CD4-positive, alpha-beta memory T cell (primary cell): ENCODE measurements at regions of chrX and their contacts with region 1.

Region 1: DNA sequence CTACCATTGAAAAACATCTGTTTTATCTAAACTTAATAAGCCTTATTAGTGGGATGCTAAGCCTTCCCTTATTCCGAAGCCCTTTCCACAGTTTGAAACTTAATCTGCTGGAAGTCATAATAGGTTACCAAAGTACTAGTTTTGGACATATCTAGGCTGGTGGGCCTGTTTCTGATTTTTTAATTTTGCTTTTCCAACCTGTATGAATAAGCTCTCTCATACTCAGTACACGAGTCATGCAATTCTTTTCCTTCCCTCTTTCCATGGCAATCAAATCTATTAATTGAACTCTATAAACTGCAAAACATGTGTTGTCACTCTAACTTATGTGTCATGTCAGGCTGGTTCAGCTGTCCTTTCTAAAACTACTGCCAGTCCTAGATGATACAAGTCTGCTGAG is 91.0 kb downstream of the AMMECR1 start:
- DNase-seq: no peak
- H3K4me3 ChIP-seq: no peak overlapping the region
- H3K4me3 Mint-ChIP-seq: no peak overlapping the region
- H3K27ac ChIP-seq: no peak overlapping the region
- H3K27ac Mint-ChIP-seq: peak overlapping the region in 2 of 7 donors; percentile 15 to 68
- H3K4me1 ChIP-seq: peaks cover 36% of the 10 kb centered on the region
- H3K4me1 Mint-ChIP-seq: peaks cover 25 to 52% (median 31%) of the 10 kb centered on the region in 4 donors
- H3K27me3 ChIP-seq: no peaks in the 10 kb centered on the region
- H3K27me3 Mint-ChIP-seq: no peaks in the 10 kb centered on the region

Region 2: DNA sequence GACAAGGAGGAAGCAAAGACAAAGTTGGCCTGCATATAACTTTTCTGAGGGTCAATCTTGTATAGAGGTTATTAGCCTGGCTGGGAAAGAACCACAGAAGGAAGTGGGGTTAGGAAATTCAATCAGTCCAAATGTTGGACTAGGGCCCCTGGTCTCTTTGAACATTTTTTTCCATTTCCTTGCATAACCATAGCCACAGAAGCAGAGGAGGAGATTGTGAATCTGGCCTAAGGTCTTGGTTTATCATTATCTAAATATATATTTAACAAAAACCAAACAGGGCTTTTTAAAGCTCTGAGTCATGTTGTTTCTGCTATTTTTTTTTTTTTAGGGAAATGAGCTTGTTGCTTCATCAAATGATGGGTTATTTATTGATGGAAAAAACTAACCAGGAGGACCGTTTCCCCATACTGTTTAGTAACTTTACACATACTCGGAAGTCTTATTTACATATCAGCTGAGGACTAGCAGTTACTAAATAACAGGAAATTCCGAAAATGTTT is 396.2 kb before region 1 on chrX:
- CTCF ChIA-PET with region 1: no interaction called
- POLR2A ChIA-PET with region 1: no interaction called
- intact Hi-C with region 1: no loop called
- DNase-seq: no peak
- H3K4me3 ChIP-seq: no peak overlapping the region
- H3K4me3 Mint-ChIP-seq: no peak overlapping the region
- H3K27ac ChIP-seq: no peak overlapping the region
- H3K27ac Mint-ChIP-seq: peak overlapping the region in 1 of 7 donors; percentile 10
- H3K4me1 ChIP-seq: no peaks in the 10 kb centered on the region
- H3K4me1 Mint-ChIP-seq: no peaks in the 10 kb centered on the region
- H3K27me3 ChIP-seq: no peaks in the 10 kb centered on the region
- H3K27me3 Mint-ChIP-seq: no peaks in the 10 kb centered on the region

Region 3: GRCh38 chrX:110241816-110242215 is 14.9 kb after region 1 on chrX:
- CTCF ChIA-PET with region 1: interaction called, 6 read pairs
- POLR2A ChIA-PET with region 1: interaction called, 41 read pairs
- intact Hi-C with region 1: loop called (anchors 1 kb)
- DNase-seq: no peak
- H3K4me3 ChIP-seq: no peak overlapping the region
- H3K4me3 Mint-ChIP-seq: peak overlapping the region in 2 of 8 donors; percentile 17 to 20
- H3K27ac ChIP-seq: no peak overlapping the region
- H3K27ac Mint-ChIP-seq: peak overlapping the region in 1 of 7 donors; percentile 46
- H3K4me1 ChIP-seq: peaks cover 57% of the 10 kb centered on the region
- H3K4me1 Mint-ChIP-seq: peaks cover 33 to 82% (median 63%) of the 10 kb centered on the region in 4 donors
- H3K27me3 ChIP-seq: no peaks in the 10 kb centered on the region
- H3K27me3 Mint-ChIP-seq: no peaks in the 10 kb centered on the region

Region 4: GRCh38 chrX:110248582-110248981 is 21.7 kb after region 1 on chrX:
- CTCF ChIA-PET with region 1: interaction called, 5 read pairs
- POLR2A ChIA-PET with region 1: interaction called, 14 read pairs
- intact Hi-C with region 1: no loop called
- DNase-seq: no peak
- H3K4me3 ChIP-seq: no peak overlapping the region
- H3K4me3 Mint-ChIP-seq: no peak overlapping the region
- H3K27ac ChIP-seq: no peak overlapping the region
- H3K27ac Mint-ChIP-seq: peak overlapping the region in 2 of 7 donors; percentile 15 to 63
- H3K4me1 ChIP-seq: peaks cover 43% of the 10 kb centered on the region
- H3K4me1 Mint-ChIP-seq: peaks cover 34 to 71% (median 52%) of the 10 kb centered on the region in 4 donors
- H3K27me3 ChIP-seq: no peaks in the 10 kb centered on the region
- H3K27me3 Mint-ChIP-seq: no peaks in the 10 kb centered on the region

Region 5: GRCh38 chrX:110268886-110269285 is 42.0 kb after region 1 on chrX:
- CTCF ChIA-PET with region 1: interaction called, 3 read pairs
- POLR2A ChIA-PET with region 1: interaction called, 9 read pairs
- intact Hi-C with region 1: loop called (anchors 5 kb)
- DNase-seq: peak in 1 of 5 donors; percentile 10
- H3K4me3 ChIP-seq: no peak overlapping the region
- H3K4me3 Mint-ChIP-seq: peak overlapping the region in 4 of 8 donors; percentile 30 to 78 (median 46)
- H3K27ac ChIP-seq: no peak overlapping the region
- H3K27ac Mint-ChIP-seq: peak overlapping the region in 4 of 7 donors; percentile 60 to 82 (median 66)
- H3K4me1 ChIP-seq: peaks cover 45% of the 10 kb centered on the region
- H3K4me1 Mint-ChIP-seq: peaks cover 31 to 68% (median 49%) of the 10 kb centered on the region in 4 donors
- H3K27me3 ChIP-seq: no peaks in the 10 kb centered on the region
- H3K27me3 Mint-ChIP-seq: no peaks in the 10 kb centered on the region

Region 6: GRCh38 chrX:110964786-110965185 is 737.9 kb after region 1 on chrX:
- CTCF ChIA-PET with region 1: no interaction called
- POLR2A ChIA-PET with region 1: no interaction called
- intact Hi-C with region 1: no loop called
- DNase-seq: no peak
- H3K4me3 ChIP-seq: no peak overlapping the region
- H3K4me3 Mint-ChIP-seq: no peak overlapping the region
- H3K27ac ChIP-seq: no peak overlapping the region
- H3K27ac Mint-ChIP-seq: no peak overlapping the region
- H3K4me1 ChIP-seq: no peaks in the 10 kb centered on the region
- H3K4me1 Mint-ChIP-seq: no peaks in the 10 kb centered on the region
- H3K27me3 ChIP-seq: no peaks in the 10 kb centered on the region
- H3K27me3 Mint-ChIP-seq: peaks cover 0 to 2% of the 10 kb centered on the region in 2 donors